Head of caudate nucleus (tissue), 42 donors: ENCODE measurements at regions of chr18 and their contacts with region 1.

Region 1: DNA sequence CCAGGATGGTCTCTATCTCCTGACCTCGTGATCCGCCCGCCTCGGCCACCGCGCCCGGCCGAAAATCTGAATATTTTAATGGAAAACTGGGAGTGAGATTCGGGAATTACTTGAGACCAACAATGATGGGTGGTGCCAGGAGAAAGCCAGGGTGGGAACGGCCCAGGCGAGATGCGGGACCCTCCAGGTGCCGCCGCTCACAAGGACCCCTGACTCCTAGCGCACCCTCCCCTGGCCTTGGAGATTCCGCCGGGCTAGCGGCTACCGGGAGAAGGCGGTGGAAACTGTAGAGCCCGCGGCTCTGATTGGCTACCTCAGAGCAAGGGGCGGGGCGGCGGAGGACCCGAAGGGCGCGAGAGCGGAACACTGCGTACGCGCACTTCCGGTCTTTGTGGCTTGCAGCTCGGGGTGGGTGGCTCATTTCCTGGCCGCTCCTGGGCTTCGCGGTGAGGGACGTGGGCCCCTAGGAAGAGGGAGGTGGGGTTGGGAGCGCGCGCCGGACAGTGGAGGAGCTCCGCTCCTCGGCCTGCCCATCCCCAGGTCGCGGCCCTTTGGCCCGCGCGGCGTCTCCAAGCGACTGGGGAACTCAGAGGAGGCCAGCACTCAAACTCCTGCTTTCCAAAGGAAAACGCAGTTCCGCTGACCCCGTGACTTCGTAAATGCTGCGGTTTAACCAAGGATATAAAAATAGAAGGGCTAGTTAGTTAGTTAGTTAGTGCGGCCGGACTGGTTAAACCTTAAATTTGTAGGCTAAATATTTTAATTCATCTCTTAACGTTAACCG is at the start of gene ZNF397:
- DNase-seq: peak; percentile 93 to 99 (median 98)

Region 2: DNA sequence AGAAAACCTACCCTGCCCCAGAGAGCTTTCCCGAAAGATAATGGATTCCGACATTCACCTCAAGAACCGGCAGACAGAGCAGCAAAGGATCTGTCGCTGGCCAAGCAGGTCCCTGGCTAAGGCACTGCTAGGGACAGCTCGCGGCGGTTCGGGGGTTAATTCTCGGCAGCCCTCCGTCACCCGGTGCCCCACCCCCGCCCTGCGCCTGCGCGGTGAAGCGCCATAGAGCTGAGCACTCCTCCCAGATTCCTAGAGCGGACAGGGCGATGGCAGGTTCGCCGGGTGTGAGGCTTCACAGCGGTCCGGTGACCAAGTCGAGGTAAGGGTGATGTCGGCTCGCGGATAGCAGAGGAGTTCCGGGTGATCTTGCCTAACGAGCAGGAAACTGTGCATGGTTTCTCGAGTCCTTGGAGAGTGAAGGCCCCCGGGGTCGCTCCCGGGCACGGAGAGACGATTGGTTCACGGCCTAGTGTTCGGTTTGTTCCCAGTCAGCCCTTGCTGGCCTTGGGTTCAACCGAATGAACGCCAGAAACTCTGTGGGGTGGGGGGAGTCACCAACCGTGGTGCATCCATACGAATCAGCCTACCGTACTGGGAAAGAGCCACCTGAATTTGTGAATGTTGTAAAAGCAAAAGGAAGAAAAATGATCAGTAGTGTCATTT is 49.3 kb after region 1 on chr18 and contains the start of gene ZSCAN30:
- intact Hi-C with region 1: loop called (anchors 2 kb)
- DNase-seq: peak; percentile 89 to 98 (median 95)

Region 3: GRCh38 chr18:35451020-35451419 is 210.2 kb after region 1 on chr18:
- intact Hi-C with region 1: no loop called
- DNase-seq: no peak